HEK293T (cell line): ENCODE measurements at regions of chr6 and their contacts with region 1.

Region 1: DNA sequence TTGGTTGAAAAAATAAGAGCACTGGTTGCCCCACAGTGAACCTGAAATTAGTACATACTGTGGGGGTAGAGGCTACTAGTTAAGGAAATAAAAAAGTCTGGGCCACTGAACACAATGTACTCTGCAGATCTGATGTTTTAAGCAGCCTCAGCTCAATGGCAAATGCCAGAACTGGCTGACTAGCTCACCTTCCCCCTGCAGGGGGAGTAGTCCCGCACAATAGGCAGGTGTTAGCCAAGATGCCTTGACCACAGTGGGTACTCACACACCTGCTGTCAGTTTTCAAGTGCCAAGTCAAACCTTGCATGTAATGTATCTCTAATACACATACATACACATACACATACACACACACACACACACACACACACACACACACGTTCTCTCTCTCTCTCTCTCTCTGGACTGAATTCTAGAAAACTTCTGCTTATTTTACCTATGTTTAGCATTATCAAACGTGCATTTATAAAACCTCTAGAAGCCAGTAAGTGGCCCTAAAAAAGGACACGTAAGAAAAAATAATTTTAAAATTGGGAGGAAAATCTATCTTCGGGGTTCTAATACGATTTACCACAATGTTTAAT is 36.1 kb downstream of the GMDS start:
- DNase-seq: peak; percentile 59

Region 2: GRCh38 chr6:2221726-2222274 is 12.5 kb after region 1 on chr6:
- CTCF ChIA-PET with region 1: interaction called, 15 read pairs
- POLR2A ChIA-PET with region 1: no interaction called
- DNase-seq: no peak

Region 3: GRCh38 chr6:2353412-2354137 is 144.3 kb after region 1 on chr6:
- CTCF ChIA-PET with region 1: interaction called, 15 read pairs
- POLR2A ChIA-PET with region 1: no interaction called
- DNase-seq: peak; percentile 57